ENCODE measurements at regions of chr10 and their contacts with region 1.

Region 1: DNA sequence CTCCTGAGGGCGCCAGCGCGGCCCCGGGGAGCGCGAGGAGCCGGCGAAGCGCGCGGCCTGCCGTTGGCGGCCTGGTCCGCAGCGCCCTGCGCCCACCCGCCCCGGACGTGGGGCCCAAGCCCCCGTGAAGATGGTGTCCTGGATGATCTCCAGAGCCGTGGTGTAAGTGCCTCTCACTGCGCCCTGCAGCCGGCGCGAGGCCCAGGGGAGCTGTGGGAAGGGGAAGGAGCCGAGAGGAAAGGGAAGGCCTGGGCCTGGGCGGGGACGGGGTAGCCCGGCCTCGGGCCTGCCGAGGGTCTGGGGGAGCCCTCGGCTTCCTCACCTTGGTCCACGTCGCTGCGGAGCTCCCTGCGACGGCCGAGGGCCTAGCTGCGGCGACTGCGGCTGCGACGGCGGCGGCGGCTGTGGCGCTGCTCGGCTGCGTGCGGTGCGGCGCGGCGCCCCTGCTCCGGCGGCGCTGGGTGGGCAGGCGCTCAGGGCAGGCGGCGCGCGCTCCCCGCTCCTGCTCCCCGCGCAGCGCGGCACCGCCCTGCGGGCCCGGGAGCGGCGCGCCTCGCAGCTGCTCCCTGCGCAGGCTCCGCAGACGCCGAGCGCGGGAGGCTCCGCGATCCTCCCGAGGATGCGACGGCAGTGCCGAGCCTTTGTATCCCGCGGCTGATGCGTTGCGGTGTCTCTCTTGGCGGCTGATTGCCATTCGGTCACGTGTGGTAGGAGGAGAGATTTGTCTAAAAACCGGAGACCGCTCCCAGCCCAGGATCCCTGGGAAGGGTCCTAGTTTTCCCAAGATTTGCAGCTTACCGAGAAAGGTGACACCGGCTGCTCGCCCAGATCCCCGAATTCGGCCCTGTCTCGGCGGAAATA is 445 bp downstream of the REEP3 start:
- DNase-seq: peak; percentile 79 to 87
- ATAC-seq: peak; percentile 88
- H3K4me3 ChIP-seq: peak overlapping the region; percentile 74 to 97
- H3K27ac ChIP-seq: peak overlapping the region; percentile 79 to 98
- H3K4me1 ChIP-seq: peaks cover 2 to 12% of the 10 kb centered on the region in 2 donors
- H3K27me3 ChIP-seq: no peaks in the 10 kb centered on the region

Region 2: GRCh38 chr10:62467527-62467926 is 1054.1 kb before region 1 on chr10:
- intact Hi-C with region 1: no loop called
- DNase-seq: no peak
- ATAC-seq: no peak
- H3K4me3 ChIP-seq: no peak overlapping the region
- H3K27ac ChIP-seq: no peak overlapping the region
- H3K4me1 ChIP-seq: no peaks in the 10 kb centered on the region
- H3K27me3 ChIP-seq: no peaks in the 10 kb centered on the region

Region 3: DNA sequence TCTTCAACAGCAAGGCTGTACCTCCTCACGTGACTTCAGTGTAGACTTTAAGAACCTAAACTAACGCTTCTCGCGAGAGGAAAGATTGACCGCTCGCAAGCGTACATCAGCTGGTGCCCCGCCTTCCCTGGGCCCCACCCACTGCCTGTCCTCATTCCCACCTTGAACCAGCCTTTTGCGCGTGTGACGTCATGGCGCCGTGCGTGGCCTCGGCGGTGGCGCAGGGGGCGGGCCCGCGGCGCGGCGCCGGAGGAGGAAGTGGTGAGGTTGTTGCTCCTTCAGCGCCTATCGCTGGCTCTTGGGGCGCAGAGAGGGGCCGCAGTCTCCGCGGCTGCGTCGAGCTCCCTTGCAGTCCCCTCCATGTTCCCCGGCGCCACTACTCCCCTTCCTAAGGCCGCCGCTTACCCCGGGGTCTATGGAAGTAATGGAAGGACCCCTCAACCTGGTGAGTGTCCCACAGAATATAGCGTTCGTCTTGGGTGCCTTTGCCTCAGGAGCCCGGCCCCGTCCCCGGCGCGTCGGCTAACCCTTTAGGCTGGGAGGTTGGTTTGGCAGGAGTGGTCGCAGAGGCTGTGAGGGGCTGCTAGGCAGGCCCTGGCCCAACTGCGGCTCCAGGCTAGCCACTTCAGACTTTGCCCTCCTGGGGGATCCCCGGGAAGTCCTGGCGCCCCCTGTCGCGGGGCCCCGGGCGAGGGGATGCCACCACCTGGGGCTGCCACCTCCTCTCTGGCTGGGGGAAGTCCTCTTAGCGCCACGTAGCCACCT is 388.4 kb before region 1 on chr10 and contains the start of gene NRBF2:
- intact Hi-C with region 1: no loop called
- DNase-seq: peak; percentile 98 to 99
- ATAC-seq: peak; percentile 100
- H3K4me3 ChIP-seq: peak within 1 kb of the TSS; percentile 70 to 81
- H3K27ac ChIP-seq: peak within 1 kb of the TSS in 1 of 2 donors; percentile 34
- H3K4me1 ChIP-seq: no peaks in the 10 kb centered on the region
- H3K27me3 ChIP-seq: no peaks in the 10 kb centered on the region
- total RNA-seq, gene NRBF2: 16.2 to 17.5 TPM

Region 4: GRCh38 chr10:63465293-63466143 is 56.1 kb before region 1 on chr10 and contains the start of gene JMJD1C:
- intact Hi-C with region 1: loop called (anchors 5 kb)
- DNase-seq: peak; percentile 87 to 94
- ATAC-seq: peak; percentile 96
- H3K4me3 ChIP-seq: peak within 1 kb of the TSS; percentile 60 to 79
- H3K27ac ChIP-seq: peak within 1 kb of the TSS; percentile 58 to 68
- H3K4me1 ChIP-seq: peaks cover 0 to 2% of the 10 kb centered on the region in 2 donors
- H3K27me3 ChIP-seq: no peaks in the 10 kb centered on the region
- total RNA-seq, gene JMJD1C: 103 to 108 TPM

Region 5: GRCh38 chr10:63579371-63580014 is 57.8 kb after region 1 on chr10:
- intact Hi-C with region 1: loop called (anchors 5 to 10 kb)
- DNase-seq: no peak
- ATAC-seq: no peak
- H3K4me3 ChIP-seq: no peak overlapping the region
- H3K27ac ChIP-seq: peak overlapping the region in 1 of 2 donors; percentile 12
- H3K4me1 ChIP-seq: peaks cover 4 to 10% of the 10 kb centered on the region in 2 donors
- H3K27me3 ChIP-seq: no peaks in the 10 kb centered on the region

Region 6: GRCh38 chr10:63588436-63589167 is 67.0 kb after region 1 on chr10:
- intact Hi-C with region 1: loop called in 1 of 2 experiments (anchors 10 kb)
- DNase-seq: no peak
- ATAC-seq: no peak
- H3K4me3 ChIP-seq: no peak overlapping the region
- H3K27ac ChIP-seq: no peak overlapping the region
- H3K4me1 ChIP-seq: peaks cover 0 to 8% of the 10 kb centered on the region in 2 donors
- H3K27me3 ChIP-seq: no peaks in the 10 kb centered on the region

Region 7: GRCh38 chr10:63707254-63707910 is 185.7 kb after region 1 on chr10:
- intact Hi-C with region 1: loop called in 1 of 2 experiments (anchors 2 kb)
- DNase-seq: no peak
- ATAC-seq: peak; percentile 87
- H3K4me3 ChIP-seq: no peak overlapping the region
- H3K27ac ChIP-seq: peak overlapping the region in 1 of 2 donors; percentile 46
- H3K4me1 ChIP-seq: peaks cover 2 to 8% of the 10 kb centered on the region in 2 donors
- H3K27me3 ChIP-seq: no peaks in the 10 kb centered on the region

Measured in aorta (tissue), 5 donors.